ENCODE measurements at regions of chr13 and their contacts with region 1.

Region 1: DNA sequence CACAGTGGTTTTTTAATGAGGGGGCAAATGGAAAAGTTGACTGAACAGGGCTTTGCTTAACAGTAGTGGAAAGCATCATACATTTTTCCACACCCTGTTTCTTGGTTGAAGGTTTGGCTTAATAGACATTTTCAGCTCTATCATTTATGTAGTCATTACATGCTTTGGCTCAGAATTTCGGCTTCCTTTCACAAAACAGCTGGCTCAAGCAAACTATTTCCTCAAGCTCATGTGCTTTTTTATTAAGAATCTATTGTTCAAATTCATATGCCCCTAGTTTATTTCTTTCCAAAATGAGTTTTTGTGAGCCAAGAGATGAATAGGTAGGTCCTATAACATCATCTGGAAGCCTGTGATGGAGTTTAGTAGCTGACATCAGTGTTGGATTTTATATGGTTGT is 113.8 kb downstream of the SLITRK6 start:
- DNase-seq: no peak
- H3K4me3 ChIP-seq: no peak overlapping the region
- H3K27ac ChIP-seq: no peak overlapping the region
- H3K4me1 ChIP-seq: no peaks in the 10 kb centered on the region
- H3K27me3 ChIP-seq: no peaks in the 10 kb centered on the region
- CTCF ChIP-seq: no peak

Region 2: GRCh38 chr13:85785205-85785604 is 99.8 kb after region 1 on chr13:
- CTCF ChIA-PET with region 1: no interaction called
- dilution Hi-C with region 1: no loop called
- in situ Hi-C with region 1: no loop called
- intact Hi-C with region 1: loop called (anchors 10 kb)
- DNase-seq: no peak
- H3K4me3 ChIP-seq: no peak overlapping the region
- H3K27ac ChIP-seq: no peak overlapping the region
- H3K4me1 ChIP-seq: no peaks in the 10 kb centered on the region
- H3K27me3 ChIP-seq: no peaks in the 10 kb centered on the region
- CTCF ChIP-seq: no peak

Measured in mammary epithelial cell (primary cell).